ENCODE measurements at regions of chr14 and their contacts with region 1.

Region 1: GRCh38 chr14:75249251-75249957 is 29.2 kb upstream of the FOS start:
- DNase-seq: peak; percentile 94
- ATAC-seq: peak; percentile 94
- H3K4me3 ChIP-seq: peak overlapping the region; percentile 31; the same call in 1 of the 2 replicates
- H3K27ac ChIP-seq: peak overlapping the region; percentile 57; the same call in 1 of the 2 replicates
- H3K4me1 ChIP-seq: peaks cover 36% of the 10 kb centered on the region
- H3K27me3 ChIP-seq: peaks cover under 1 to 5% of the 10 kb centered on the region in 2 experiments; a peak in 2 of 4 replicates
- CTCF ChIP-seq: no peak
- EP300 ChIP-seq: peak; percentile 87 to 97; a peak in 3 of 4 replicates
- POLR2A ChIP-seq: no peak
- RAD21 ChIP-seq: no peak

Region 2: DNA sequence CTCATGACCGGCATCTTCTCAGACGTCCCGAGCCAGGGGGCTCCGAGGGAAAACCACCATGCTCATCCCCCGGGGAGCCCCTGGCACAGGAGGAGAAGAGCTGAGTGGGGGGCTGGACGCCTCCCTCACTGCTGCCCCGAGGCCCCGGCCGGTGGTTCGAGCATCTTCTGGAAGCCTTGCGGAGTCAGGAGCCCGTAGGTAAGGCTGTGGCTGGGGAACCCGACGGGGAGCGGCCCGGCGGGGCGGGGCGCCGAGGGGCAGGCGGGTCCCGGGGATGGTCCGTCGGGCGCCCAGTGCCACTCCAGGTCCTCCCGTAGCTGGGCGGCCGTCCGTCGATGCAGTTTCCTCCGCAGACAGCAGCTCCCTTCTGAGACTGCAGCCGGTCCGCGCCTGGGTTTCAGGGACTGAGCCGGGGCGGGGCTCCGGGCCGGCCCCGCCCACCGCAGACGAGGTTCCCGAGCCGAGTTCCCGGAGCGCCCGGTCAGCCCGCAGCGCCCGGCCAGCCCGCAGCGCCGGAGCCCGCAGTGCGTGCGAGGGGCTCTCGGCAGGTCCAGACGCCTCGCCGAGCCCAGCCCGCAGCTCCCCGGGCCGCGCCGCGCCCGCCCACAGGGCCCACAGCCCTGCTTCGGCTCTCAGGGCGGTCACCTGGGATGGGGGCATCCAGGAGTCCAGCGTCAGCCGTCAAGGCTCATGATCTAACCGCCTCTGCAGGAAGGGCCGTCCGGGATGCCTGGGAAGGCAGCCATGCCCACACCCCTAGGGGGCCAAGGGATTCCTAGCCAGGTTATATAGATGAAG is 294.0 kb before region 1 on chr14 and contains the start of gene PGF:
- CTCF ChIA-PET with region 1: no interaction called
- POLR2A ChIA-PET with region 1: no interaction called
- RAD21 ChIA-PET with region 1: no interaction called
- SMC1A ChIA-PET with region 1: no interaction called
- in situ Hi-C with region 1: no loop called
- intact Hi-C with region 1: no loop called
- DNase-seq: no peak
- ATAC-seq: peak; percentile 72
- H3K4me3 ChIP-seq: peak within 1 kb of the TSS; percentile 63
- H3K27ac ChIP-seq: no peak within 1 kb of the TSS
- H3K4me1 ChIP-seq: no peaks in the 10 kb centered on the region
- H3K27me3 ChIP-seq: no peaks in the 10 kb centered on the region; a peak in 2 of 4 replicates
- CTCF ChIP-seq: no peak
- EP300 ChIP-seq: no peak
- POLR2A ChIP-seq: no peak
- RAD21 ChIP-seq: no peak
- polyA plus RNA-seq, gene PGF: 0.11 to 0.16 TPM

Region 3: DNA sequence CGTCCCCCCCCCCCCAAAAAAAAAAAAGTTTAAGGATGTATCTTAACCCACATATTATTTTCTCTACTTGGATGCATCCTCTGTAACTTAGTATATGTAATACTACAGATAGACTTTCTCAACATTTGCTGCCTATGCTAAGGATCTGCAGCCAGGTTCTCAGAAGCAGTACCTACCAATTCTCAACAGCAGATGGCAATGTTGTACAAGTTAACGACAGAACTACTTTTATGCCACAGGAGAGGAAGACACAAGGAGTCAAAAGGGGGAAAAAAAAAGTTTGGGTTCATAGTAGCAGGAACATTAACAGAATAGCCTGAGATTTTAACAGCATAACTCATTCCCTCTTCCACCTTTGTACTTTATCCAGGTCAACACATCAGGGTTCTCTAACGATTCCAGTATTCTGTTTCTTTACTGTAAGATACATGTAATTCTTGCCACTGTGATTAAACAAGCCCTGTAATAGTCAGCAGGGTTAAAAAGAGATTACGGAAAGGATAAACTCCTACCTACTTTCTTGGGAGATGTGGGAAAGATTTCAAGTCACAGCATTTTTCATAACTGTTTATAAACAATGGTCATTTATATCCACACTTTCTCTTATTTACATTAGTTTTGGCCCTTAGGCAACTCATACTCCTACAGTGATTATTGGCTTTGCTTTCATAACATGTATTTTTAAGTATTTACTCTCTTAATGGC is 116.9 kb before region 1 on chr14:
- CTCF ChIA-PET with region 1: interaction called, 3 read pairs
- POLR2A ChIA-PET with region 1: no interaction called
- RAD21 ChIA-PET with region 1: no interaction called
- SMC1A ChIA-PET with region 1: interaction called, 7 read pairs
- in situ Hi-C with region 1: no loop called
- intact Hi-C with region 1: loop called (anchors 5 kb)
- DNase-seq: peak; percentile 66
- ATAC-seq: peak; percentile 91
- H3K4me3 ChIP-seq: no peak overlapping the region
- H3K27ac ChIP-seq: no peak overlapping the region
- H3K4me1 ChIP-seq: peaks cover 11% of the 10 kb centered on the region
- H3K27me3 ChIP-seq: no peaks in the 10 kb centered on the region
- CTCF ChIP-seq: peak; percentile 67 to 70 (median 68)
- EP300 ChIP-seq: no peak
- POLR2A ChIP-seq: no peak
- RAD21 ChIP-seq: peak; percentile 94

Region 4: GRCh38 chr14:75176142-75176820 is 73.1 kb before region 1 on chr14 and contains the start of gene TMED10:
- CTCF ChIA-PET with region 1: no interaction called
- POLR2A ChIA-PET with region 1: no interaction called
- RAD21 ChIA-PET with region 1: no interaction called
- SMC1A ChIA-PET with region 1: interaction called, 4 read pairs
- in situ Hi-C with region 1: no loop called
- intact Hi-C with region 1: loop called (anchors 5 kb)
- DNase-seq: no peak
- ATAC-seq: peak; percentile 89
- H3K4me3 ChIP-seq: peak within 1 kb of the TSS; percentile 80
- H3K27ac ChIP-seq: peak within 1 kb of the TSS; percentile 99
- H3K4me1 ChIP-seq: no peaks in the 10 kb centered on the region; the same call in 1 of the 2 replicates
- H3K27me3 ChIP-seq: no peaks in the 10 kb centered on the region
- CTCF ChIP-seq: peak in 1 of 3 experiments; percentile 12; a peak in 1 of 6 replicates
- EP300 ChIP-seq: 0 out of 4 replicates have a peak, but pooled peaks of 1 of the 2 experiments have one; percentile 11
- POLR2A ChIP-seq: peak; percentile 92
- RAD21 ChIP-seq: no peak; the same call in 1 of the 2 replicates
- polyA plus RNA-seq, gene TMED10: 150 to 270 TPM

Region 5: DNA sequence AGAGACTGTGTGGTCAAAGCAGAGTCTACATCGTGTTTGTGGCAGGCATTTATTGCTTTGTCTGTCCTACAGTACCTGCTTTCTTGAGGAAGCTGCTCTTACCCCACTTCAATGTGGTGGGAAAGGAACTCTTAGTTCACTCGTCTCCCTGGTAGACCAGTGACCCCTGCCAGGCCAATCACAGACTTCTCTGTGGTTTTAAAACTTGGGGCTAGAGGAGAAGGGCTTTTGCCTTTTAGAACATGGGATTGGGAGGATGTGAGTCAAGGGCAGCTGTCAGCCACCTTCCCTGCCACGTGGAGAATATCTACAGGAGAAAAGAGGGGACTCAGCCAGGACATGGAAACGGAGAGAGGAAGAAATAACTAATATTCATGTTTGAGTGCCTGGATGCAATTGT is 36.2 kb before region 1 on chr14:
- CTCF ChIA-PET with region 1: interaction called, 4 read pairs
- POLR2A ChIA-PET with region 1: no interaction called
- RAD21 ChIA-PET with region 1: no interaction called
- SMC1A ChIA-PET with region 1: interaction called, 8 read pairs
- in situ Hi-C with region 1: no loop called
- intact Hi-C with region 1: loop called (anchors 1 kb)
- DNase-seq: no peak
- ATAC-seq: no peak
- H3K4me3 ChIP-seq: no peak overlapping the region
- H3K27ac ChIP-seq: no peak overlapping the region
- H3K4me1 ChIP-seq: peaks cover 9% of the 10 kb centered on the region
- H3K27me3 ChIP-seq: no peaks in the 10 kb centered on the region
- CTCF ChIP-seq: no peak
- EP300 ChIP-seq: no peak
- POLR2A ChIP-seq: no peak
- RAD21 ChIP-seq: no peak

Region 6: GRCh38 chr14:75230140-75231045 is 19.0 kb before region 1 on chr14:
- CTCF ChIA-PET with region 1: interaction called, 4 read pairs
- POLR2A ChIA-PET with region 1: interaction called, 4 read pairs
- RAD21 ChIA-PET with region 1: interaction called, 5 read pairs
- SMC1A ChIA-PET with region 1: interaction called, 7 read pairs
- in situ Hi-C with region 1: no loop called
- intact Hi-C with region 1: loop called (anchors 2 kb)
- DNase-seq: peak; percentile 74
- ATAC-seq: peak; percentile 81
- H3K4me3 ChIP-seq: no peak overlapping the region
- H3K27ac ChIP-seq: peak overlapping the region; percentile 34; the same call in 1 of the 2 replicates
- H3K4me1 ChIP-seq: peaks cover 37% of the 10 kb centered on the region
- H3K27me3 ChIP-seq: no peaks in the 10 kb centered on the region
- CTCF ChIP-seq: peak in 1 of 3 experiments; percentile 19; a peak in 1 of 6 replicates
- EP300 ChIP-seq: 0 out of 4 replicates have a peak, but pooled peaks of 1 of the 2 experiments have one; percentile 23
- POLR2A ChIP-seq: no peak
- RAD21 ChIP-seq: no peak